Colonic mucosa (tissue), 4 donors: ENCODE measurements at regions of chr15 and their contacts with region 1.

Region 1: GRCh38 chr15:80455668-80456442 is 51.7 kb downstream of the ARNT2 start:
- DNase-seq: peak; percentile 50
- H3K4me3 ChIP-seq: no peak overlapping the region
- H3K27ac ChIP-seq: no peak overlapping the region
- H3K4me1 ChIP-seq: no peaks in the 10 kb centered on the region
- H3K27me3 ChIP-seq: no peaks in the 10 kb centered on the region
- CTCF ChIP-seq: peak; percentile 89

Region 2: DNA sequence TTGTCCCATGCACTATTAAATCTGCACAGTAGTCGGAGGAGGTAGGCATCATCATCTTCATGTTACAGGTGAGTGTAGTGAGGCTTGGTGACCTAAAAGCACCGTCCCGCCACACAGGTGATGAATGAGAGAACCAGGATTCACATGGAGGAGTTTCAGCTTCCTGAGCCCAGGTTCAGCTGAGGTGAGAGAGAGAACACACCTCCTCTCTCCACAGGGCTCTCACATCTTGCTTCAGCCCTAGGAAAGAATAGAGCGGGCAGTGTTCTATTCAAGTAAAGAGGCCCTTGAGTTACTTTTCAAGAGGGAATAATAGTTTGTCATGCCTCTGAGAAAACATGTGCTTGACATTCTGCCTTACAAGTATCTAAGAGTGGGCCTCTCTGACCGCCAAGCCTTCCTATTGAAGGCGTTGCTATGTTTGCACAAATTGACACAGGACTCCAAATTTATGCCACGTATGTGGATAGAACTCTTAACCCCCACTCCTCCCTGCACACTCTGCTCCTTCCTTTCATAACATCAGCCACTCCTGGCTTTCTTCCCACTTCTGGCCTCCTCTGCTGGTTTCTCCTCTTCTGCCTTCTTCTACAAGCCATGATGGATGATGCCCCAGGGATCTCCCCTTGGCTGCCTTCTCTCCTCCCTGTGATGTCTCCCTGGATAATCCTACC is 101.0 kb after region 1 on chr15:
- intact Hi-C with region 1: loop called (anchors 5 kb)
- DNase-seq: no peak
- H3K4me3 ChIP-seq: no peak overlapping the region
- H3K27ac ChIP-seq: no peak overlapping the region
- H3K4me1 ChIP-seq: no peaks in the 10 kb centered on the region
- H3K27me3 ChIP-seq: no peaks in the 10 kb centered on the region
- CTCF ChIP-seq: no peak

Region 3: DNA sequence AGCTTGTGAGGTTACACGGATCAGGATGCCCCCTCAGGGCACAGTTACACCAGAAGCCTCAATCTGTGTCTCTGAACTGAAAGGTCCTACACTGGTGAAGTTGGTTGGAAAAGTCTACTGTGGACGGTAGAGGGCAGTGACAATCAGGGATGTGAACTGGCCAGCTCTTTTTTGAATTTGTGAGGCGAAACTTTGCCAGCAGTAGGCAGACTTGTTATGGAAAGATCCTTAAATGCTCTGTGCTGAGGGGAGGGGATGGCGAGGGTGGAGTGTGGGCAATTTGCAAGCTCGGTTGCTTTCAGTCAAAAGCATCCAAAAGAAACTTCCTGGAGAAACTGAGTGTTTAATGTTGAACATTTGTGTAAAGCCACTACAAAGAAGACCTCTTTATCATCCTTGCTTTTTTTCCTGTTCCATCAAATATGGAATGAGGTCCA is 111.9 kb after region 1 on chr15:
- intact Hi-C with region 1: loop called (anchors 5 kb)
- DNase-seq: peak; percentile 71
- H3K4me3 ChIP-seq: no peak overlapping the region
- H3K27ac ChIP-seq: no peak overlapping the region
- H3K4me1 ChIP-seq: no peaks in the 10 kb centered on the region
- H3K27me3 ChIP-seq: no peaks in the 10 kb centered on the region
- CTCF ChIP-seq: peak; percentile 56

Region 4: DNA sequence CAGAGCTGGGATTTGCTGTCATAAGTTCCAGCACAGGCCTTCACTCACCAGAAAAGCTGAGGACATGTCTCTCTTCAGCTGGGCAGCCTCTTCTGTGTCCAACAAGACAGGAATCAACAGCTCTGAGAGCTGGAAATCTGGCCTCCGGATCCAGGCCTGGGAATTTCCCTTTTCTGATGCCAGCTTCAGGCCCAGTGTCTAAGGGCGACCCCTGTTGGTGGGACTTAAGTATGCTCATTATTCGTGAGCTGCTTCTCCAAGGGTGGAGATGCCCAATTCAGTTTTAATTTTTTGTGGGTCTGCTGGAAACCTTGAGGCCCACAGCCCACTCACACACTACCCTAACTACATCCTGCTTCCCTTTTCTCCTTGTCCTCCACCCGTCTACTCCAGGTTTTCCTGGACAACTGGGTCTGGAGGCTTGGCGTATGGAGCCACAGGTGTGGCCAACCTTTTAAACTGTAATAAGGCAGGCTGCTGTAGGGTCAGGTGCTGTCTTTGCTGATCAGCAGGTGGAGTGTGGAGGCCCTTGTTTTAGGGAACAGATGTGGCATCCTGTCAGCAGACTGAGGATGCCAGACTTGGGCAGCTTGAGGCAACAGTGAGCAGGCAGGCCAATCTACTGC is 320.7 kb after region 1 on chr15:
- intact Hi-C with region 1: loop called (anchors 2 kb)
- DNase-seq: peak; percentile 84
- H3K4me3 ChIP-seq: no peak overlapping the region
- H3K27ac ChIP-seq: peak overlapping the region; percentile 66
- H3K4me1 ChIP-seq: peaks cover 11% of the 10 kb centered on the region
- H3K27me3 ChIP-seq: peaks cover 17% of the 10 kb centered on the region
- CTCF ChIP-seq: peak; percentile 84

Region 5: GRCh38 chr15:80970018-80970658 is 514.3 kb after region 1 on chr15:
- intact Hi-C with region 1: loop called (anchors 2 kb)
- DNase-seq: peak; percentile 73
- H3K4me3 ChIP-seq: no peak overlapping the region
- H3K27ac ChIP-seq: no peak overlapping the region
- H3K4me1 ChIP-seq: no peaks in the 10 kb centered on the region
- H3K27me3 ChIP-seq: no peaks in the 10 kb centered on the region
- CTCF ChIP-seq: peak; percentile 81

Region 6: DNA sequence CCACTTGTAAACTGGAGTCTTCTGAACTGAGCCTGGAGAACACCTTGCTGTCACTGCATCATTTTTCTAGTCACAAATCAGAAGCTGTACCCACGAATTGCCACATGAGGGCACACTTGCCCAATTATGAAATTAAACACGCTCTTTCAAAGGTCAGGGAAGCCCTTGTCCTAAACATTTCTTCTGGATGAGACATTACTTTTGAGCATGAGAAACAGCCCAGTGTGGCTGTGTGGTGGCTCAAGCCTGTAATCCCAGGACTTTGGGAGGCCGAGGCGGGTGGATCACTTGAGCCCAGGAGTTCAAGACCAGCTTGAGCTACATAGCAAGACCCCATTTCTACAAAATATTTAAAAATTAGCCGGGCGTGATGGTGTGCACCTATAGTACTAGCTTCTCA is 650.7 kb after region 1 on chr15:
- intact Hi-C with region 1: loop called (anchors 5 kb)
- DNase-seq: peak; percentile 45
- H3K4me3 ChIP-seq: no peak overlapping the region
- H3K27ac ChIP-seq: no peak overlapping the region
- H3K4me1 ChIP-seq: no peaks in the 10 kb centered on the region
- H3K27me3 ChIP-seq: no peaks in the 10 kb centered on the region
- CTCF ChIP-seq: peak; percentile 70